Activated CD8-positive, alpha-beta T cell treated with anti-CD3 and anti-CD28 coated beads for 36 hours (primary cell): ENCODE measurements at regions of chr5 and their contacts with region 1.

Region 1: DNA sequence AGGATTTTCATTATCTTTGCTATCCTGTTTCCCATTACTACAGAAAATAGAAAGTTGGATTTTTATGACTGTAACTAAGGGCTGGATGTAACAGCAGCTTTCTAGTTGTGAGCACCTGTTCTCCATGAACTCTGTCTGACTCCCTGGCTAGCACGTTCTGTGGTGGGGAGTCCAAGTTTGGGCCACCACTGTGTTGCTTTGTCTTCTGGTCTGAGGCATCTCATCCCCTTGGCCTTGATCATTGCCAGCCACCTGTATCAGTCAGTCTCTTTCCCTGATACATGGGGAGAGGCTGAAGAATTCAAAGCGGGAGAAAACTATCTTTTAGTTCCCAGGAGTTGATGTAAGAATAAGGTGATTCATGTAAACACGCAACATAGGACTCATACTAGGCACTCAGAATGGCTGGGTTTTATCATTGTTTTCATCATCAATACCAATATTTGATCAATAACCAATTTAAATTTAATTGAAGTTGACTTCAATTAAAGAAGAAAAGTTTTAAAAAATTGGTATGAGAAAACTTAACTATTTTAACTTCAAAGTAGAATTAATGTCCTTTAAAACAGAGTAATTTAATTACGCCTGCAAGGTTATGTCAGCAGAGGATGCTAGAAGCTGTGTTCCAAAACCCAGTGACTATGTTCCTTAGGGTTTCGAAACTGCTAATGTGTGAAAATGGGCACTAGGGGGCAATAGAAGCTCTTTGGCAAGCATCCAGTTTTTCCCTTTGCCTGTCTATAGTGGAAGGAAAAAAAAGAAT is 33.6 kb downstream of the WDR70 start:
- DNase-seq: peak; percentile 41
- ATAC-seq: peak; percentile 77
- H3K4me3 Mint-ChIP-seq: no peak overlapping the region
- H3K27ac Mint-ChIP-seq: no peak overlapping the region
- H3K4me1 Mint-ChIP-seq: peaks cover 2% of the 10 kb centered on the region
- H3K27me3 Mint-ChIP-seq: no peaks in the 10 kb centered on the region
- CTCF ChIP-seq: peak; percentile 89

Region 2: DNA sequence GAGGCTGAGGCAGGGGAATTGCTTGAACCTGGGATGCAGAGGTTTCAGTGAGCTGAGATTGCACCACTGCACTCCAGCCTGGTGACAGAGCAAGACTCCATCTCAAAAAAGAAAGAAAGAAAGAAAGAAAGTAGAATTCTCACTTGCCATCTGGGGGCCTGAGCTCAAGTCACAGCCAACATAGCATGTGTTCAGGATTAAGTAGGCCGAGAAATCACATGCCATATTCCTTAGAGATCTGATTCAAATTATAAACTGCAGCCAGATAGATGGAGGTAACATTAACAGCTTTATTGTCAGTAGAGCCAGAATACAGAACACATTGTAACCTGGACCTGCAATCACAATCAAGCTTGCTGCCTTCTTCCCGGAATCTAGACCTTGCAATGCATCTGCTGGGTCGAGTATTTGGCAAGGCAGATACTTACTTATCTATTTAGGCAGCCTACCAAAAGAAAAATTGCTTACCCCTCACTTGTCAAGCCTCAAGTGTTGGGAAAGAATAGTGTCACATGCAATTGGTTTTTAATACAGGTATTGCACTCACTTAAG is 337.2 kb before region 1 on chr5:
- CTCF ChIA-PET with region 1: no interaction called
- POLR2A ChIA-PET with region 1: no interaction called
- intact Hi-C with region 1: no loop called
- DNase-seq: no peak
- ATAC-seq: no peak
- H3K4me3 Mint-ChIP-seq: no peak overlapping the region
- H3K27ac Mint-ChIP-seq: no peak overlapping the region
- H3K4me1 Mint-ChIP-seq: no peaks in the 10 kb centered on the region
- H3K27me3 Mint-ChIP-seq: no peaks in the 10 kb centered on the region
- CTCF ChIP-seq: no peak

Region 3: DNA sequence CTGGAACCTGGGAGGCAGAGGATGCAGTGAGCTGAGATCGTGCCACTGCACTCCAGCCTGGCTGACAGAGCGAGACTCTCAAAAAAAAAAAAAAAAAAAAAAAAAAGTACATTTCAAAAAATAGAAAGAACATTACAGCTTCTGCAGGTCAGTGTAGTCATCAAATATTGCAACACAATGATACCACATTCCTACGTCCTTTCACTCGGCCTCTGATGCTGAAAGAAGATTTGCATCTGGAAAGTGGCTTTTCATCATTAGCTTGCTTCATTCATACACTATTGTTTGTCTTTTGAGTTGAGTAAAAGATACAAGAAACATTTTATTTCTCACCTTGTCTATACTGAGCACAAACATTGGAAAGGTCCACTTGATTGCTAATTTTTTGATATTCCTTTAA is 103.9 kb before region 1 on chr5:
- CTCF ChIA-PET with region 1: no interaction called
- POLR2A ChIA-PET with region 1: no interaction called
- intact Hi-C with region 1: no loop called
- DNase-seq: no peak
- ATAC-seq: no peak
- H3K4me3 Mint-ChIP-seq: no peak overlapping the region
- H3K27ac Mint-ChIP-seq: no peak overlapping the region
- H3K4me1 Mint-ChIP-seq: no peaks in the 10 kb centered on the region
- H3K27me3 Mint-ChIP-seq: no peaks in the 10 kb centered on the region
- CTCF ChIP-seq: no peak

Region 4: DNA sequence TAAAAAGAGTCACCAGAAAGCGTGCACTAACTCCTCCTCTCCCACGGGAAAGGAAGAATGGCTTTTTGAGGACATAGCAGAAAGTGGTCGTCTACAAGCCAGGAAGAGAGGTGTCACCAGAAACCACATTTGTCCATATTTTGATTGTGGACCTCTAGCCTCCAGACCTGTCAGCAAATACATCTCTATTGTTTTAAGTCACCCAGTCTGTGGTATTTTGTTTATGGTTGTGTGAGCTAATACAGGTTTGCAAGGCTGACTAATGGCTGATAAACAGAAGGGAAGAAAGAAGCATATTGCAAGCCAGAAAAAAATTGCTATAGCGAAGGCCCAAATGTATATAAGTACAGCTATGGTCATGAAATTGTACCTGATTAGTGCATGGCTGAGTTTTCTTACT is 12.2 kb before region 1 on chr5:
- CTCF ChIA-PET with region 1: interaction called, 10 read pairs
- POLR2A ChIA-PET with region 1: no interaction called
- intact Hi-C with region 1: no loop called
- DNase-seq: no peak
- ATAC-seq: no peak
- H3K4me3 Mint-ChIP-seq: no peak overlapping the region
- H3K27ac Mint-ChIP-seq: no peak overlapping the region
- H3K4me1 Mint-ChIP-seq: no peaks in the 10 kb centered on the region
- H3K27me3 Mint-ChIP-seq: no peaks in the 10 kb centered on the region
- CTCF ChIP-seq: no peak

Region 5: GRCh38 chr5:37424441-37424840 is 11.7 kb after region 1 on chr5:
- CTCF ChIA-PET with region 1: interaction called, 24 read pairs
- POLR2A ChIA-PET with region 1: no interaction called
- intact Hi-C with region 1: no loop called
- DNase-seq: no peak
- ATAC-seq: no peak
- H3K4me3 Mint-ChIP-seq: no peak overlapping the region
- H3K27ac Mint-ChIP-seq: no peak overlapping the region
- H3K4me1 Mint-ChIP-seq: peaks cover 10% of the 10 kb centered on the region
- H3K27me3 Mint-ChIP-seq: no peaks in the 10 kb centered on the region
- CTCF ChIP-seq: no peak

Region 6: DNA sequence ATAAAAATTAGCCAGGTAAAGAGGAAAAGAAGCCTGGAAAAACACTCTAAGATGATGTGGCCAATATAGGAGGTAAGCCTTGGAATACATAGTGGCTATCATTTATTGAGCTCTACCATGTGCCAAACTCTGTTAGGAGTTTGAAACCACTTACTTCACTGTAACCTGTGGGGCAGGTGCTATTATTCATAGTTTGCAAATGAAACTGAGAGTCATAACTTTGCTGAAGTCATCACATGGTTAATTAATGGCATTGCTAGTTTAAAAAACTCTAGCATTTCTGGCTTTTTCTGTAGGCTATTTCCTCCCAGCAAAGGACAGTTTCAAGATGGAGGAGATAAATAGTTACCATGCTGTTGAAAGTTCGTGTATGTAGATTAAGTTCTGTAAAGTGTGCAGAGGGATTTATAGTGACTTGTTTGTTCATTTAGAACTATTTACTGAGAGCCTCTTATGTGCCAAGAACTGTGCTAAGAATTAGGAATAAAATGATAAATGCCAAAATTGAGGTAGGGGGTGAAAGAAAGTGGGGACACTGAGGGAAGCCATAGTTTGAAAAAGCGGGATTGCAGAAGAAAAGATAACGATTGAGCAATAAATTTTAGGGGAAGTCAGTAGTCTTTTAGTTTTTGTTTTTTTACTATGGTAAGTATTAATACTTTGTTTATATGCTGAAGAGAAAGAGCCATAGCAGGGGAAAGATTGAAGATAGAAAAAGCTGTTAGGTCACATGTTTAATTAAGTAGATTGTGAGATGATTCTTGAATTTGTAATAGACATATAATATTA is 23.6 kb after region 1 on chr5:
- CTCF ChIA-PET with region 1: interaction called, 13 read pairs
- POLR2A ChIA-PET with region 1: no interaction called
- intact Hi-C with region 1: no loop called
- DNase-seq: no peak
- ATAC-seq: no peak
- H3K4me3 Mint-ChIP-seq: no peak overlapping the region
- H3K27ac Mint-ChIP-seq: no peak overlapping the region
- H3K4me1 Mint-ChIP-seq: peaks cover 16% of the 10 kb centered on the region
- H3K27me3 Mint-ChIP-seq: no peaks in the 10 kb centered on the region
- CTCF ChIP-seq: no peak

Region 7: GRCh38 chr5:38193015-38193581 is 780.4 kb after region 1 on chr5:
- CTCF ChIA-PET with region 1: interaction called, 27 read pairs
- POLR2A ChIA-PET with region 1: no interaction called
- intact Hi-C with region 1: loop called (anchors 5 kb)
- DNase-seq: peak; percentile 75
- ATAC-seq: peak; percentile 81
- H3K4me3 Mint-ChIP-seq: no peak overlapping the region
- H3K27ac Mint-ChIP-seq: no peak overlapping the region
- H3K4me1 Mint-ChIP-seq: no peaks in the 10 kb centered on the region
- H3K27me3 Mint-ChIP-seq: peaks cover 22% of the 10 kb centered on the region
- CTCF ChIP-seq: peak; percentile 81